ENCODE measurements at regions of chr17 and their contacts with region 1.

Region 1: GRCh38 chr17:28644985-28645939 is at the start of gene BLTP2:
- DNase-seq: peak; percentile 99
- total RNA-seq, gene BLTP2: 105 to 120 TPM

Region 2: GRCh38 chr17:28623696-28624095 is 21.6 kb before region 1 on chr17:
- intact Hi-C with region 1: no loop called
- DNase-seq: peak; percentile 41

Region 3: GRCh38 chr17:28684963-28685362 is 39.7 kb after region 1 on chr17:
- intact Hi-C with region 1: no loop called
- DNase-seq: peak; percentile 18

Region 4: DNA sequence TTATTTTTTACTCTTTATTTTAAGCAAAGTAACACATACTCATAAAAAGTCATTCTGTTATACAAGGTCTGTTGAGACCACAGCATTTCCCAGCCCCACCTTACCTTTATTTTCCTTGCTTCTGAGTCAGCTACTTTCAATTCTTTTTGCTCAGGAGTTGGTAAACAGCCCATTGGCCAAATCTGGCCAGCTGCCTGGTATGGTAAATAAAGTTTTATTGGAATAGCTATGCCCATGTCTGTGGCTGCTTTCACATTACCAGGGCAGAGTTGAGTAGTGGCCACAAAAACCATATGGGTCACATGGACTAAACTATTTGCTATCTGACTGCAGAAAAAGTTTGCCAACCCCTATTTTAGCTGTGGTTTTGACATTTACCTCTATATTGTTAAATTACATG is 1468.0 kb after region 1 on chr17:
- intact Hi-C with region 1: loop called in 1 of 2 experiments (anchors 5 kb)
- DNase-seq: no peak